Posterior cingulate gyrus (tissue), 11 donors: ENCODE measurements at regions of chr22 and their contacts with region 1.

Region 1: DNA sequence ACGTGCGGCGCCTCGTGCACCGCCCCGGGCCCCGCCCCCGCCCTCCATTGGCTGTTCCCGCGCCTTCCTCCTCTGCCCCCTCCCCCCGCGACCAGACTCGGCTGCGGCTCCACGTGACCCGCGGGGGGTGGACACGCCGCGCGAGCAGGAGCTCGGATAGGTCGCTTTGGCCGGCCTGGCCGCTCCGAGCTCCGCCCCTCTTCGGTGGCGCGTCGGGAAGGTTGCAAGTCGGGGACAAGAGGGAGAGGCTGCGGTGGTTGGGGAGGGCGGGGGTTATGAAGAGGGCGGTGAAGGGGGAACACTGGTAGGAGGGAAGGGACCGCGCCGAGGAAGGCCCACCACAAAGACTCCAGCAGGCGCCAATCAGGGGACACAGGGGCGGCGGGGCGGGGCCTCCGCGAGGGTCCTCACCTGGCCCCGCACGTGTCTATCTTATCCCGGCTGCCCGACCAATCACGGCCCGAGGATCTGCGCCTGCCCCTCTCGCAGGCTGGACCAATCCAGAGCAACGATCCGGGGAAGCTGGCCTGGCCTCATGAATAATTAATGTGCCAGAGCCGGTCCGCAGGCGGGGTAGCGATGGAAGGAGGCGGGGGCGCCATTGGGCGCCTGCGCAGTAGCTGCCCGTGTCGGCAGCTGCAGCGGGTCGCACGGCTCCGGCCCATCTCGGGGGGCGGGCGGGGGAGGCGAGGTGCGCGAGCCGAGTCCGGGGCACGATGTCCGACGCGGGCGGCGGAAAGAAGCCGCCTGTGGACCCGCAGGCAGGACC is at the start of gene TEF:
- DNase-seq: peak; percentile 98 to 100 (median 99)

Region 2: GRCh38 chr22:40950962-40951794 is 430.3 kb before region 1 on chr22 and contains the start of gene RBX1:
- intact Hi-C with region 1: loop called (anchors 5 kb)
- DNase-seq: peak; percentile 96 to 100 (median 98)

Region 3: GRCh38 chr22:41367039-41367679 is 14.4 kb before region 1 on chr22:
- intact Hi-C with region 1: loop called (anchors 1 kb)
- DNase-seq: peak; percentile 98 to 100 (median 98)